Cardiac septum (tissue), 1 donor: ENCODE measurements at regions of chrX and their contacts with region 1.

Region 1: DNA sequence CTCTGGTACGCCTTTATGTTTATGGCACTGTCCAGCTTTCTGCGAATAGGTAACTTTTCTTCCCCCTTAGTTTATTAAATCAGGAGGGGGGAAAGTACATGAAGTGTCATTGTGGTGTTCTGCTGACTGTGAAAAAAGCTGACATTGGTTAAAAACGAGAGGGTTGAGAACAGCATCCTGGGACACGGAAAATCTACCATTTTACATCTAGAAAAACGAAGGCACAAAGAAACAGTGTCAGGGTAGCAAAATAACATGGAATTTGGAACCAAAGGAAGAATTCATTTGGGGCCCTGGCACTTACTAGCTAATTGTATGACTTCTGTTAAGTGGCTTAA is 1.2 kb upstream of the AMOT start:
- DNase-seq: no peak

Region 2: GRCh38 chrX:112877771-112878173 is 36.0 kb after region 1 on chrX:
- intact Hi-C with region 1: loop called (anchors 2 kb)
- DNase-seq: no peak